Natural killer cell (primary cell): ENCODE measurements at regions of chr3 and their contacts with region 1.

Region 1: DNA sequence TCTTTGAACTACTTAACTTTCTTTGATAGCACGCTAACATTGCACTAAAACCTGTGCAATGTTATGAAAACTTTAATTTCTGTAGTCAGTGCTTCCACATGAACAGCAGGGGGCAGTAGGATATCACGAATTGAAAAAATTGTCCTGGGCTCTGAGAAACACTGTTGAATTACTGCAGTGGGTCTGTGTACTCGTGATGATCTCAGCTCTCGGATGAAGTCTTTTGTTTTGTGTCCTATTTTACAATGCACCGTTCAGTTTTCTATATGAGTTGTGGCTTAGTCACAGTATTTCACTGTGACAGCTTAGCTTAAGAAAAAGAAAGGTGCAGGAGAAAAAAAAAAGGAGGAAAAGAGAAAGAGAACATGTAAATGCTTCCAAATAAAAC is 141.3 kb upstream of the CCDC54 start:
- DNase-seq: peak in 1 of 2 donors; percentile 84
- ATAC-seq: peak; percentile 70 to 76 (median 75)
- H3K4me3 ChIP-seq: no peak overlapping the region
- H3K4me3 Mint-ChIP-seq: peak overlapping the region; percentile 77
- H3K27ac ChIP-seq: no peak overlapping the region
- H3K27ac Mint-ChIP-seq: no peak overlapping the region
- H3K4me1 ChIP-seq: peaks cover 10% of the 10 kb centered on the region
- H3K4me1 Mint-ChIP-seq: peaks cover 11 to 17% of the 10 kb centered on the region in 2 donors
- H3K27me3 ChIP-seq: peaks cover under 1% of the 10 kb centered on the region
- H3K27me3 Mint-ChIP-seq: peaks cover 25 to 40% of the 10 kb centered on the region in 2 donors
- CTCF ChIP-seq: peak; percentile 85

Region 2: GRCh38 chr3:107216711-107217110 is 19.2 kb before region 1 on chr3:
- intact Hi-C with region 1: no loop called
- DNase-seq: no peak
- ATAC-seq: no peak
- H3K4me3 ChIP-seq: no peak overlapping the region
- H3K4me3 Mint-ChIP-seq: no peak overlapping the region
- H3K27ac ChIP-seq: no peak overlapping the region
- H3K27ac Mint-ChIP-seq: no peak overlapping the region
- H3K4me1 ChIP-seq: no peaks in the 10 kb centered on the region
- H3K4me1 Mint-ChIP-seq: no peaks in the 10 kb centered on the region
- H3K27me3 ChIP-seq: no peaks in the 10 kb centered on the region
- H3K27me3 Mint-ChIP-seq: peaks cover 3 to 13% of the 10 kb centered on the region in 2 donors
- CTCF ChIP-seq: no peak

Region 3: GRCh38 chr3:107429320-107430181 is 193.6 kb after region 1 on chr3:
- intact Hi-C with region 1: loop called (anchors 2 kb)
- DNase-seq: peak; percentile 40 to 82
- ATAC-seq: peak; percentile 65 to 74 (median 71)
- H3K4me3 ChIP-seq: peak overlapping the region; percentile 73
- H3K4me3 Mint-ChIP-seq: peak overlapping the region; percentile 88
- H3K27ac ChIP-seq: no peak overlapping the region
- H3K27ac Mint-ChIP-seq: no peak overlapping the region
- H3K4me1 ChIP-seq: peaks cover 24% of the 10 kb centered on the region
- H3K4me1 Mint-ChIP-seq: peaks cover 14% of the 10 kb centered on the region in 2 donors
- H3K27me3 ChIP-seq: peaks cover 10% of the 10 kb centered on the region
- H3K27me3 Mint-ChIP-seq: peaks cover 15 to 35% of the 10 kb centered on the region in 2 donors
- CTCF ChIP-seq: peak; percentile 76

Region 4: DNA sequence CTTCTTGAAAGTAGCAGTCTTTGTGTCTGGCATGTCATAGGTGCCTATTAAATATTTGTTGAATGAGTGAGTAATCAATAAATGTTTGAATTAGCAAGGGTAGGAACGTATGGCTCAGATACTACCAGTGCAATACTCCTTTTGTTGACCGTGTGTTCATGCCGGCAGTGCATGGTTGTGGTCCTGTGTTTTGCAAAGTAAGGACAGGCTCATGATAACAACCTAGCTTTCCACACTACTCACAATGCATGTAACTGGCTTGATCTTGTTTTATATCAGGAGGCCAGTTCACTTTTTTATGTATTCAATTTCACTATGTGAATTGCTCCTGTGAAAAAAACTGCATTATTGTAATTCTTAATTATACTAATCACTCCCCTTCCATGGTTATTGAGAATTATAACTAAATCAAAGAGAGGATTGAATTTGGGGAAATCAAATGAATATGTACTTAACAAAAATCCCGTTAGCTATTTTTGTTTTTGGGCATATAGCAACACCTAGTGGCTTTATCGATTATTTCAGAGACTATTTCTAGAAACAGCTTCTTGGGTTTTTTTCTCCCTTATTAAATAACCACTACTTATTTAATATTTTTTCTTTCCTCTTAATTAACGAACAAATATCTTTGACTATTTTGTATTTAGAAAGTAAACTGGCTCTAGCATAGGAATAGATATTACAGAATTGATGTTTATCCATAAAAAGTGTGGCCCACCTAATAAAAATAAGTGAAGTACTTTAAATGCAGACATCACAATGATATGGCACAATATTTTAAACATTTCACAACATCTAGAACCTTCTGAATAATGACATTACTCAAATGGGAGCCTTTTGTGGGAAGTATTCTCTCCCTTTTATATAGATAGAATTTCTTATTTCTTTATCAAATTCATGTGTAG is 505.3 kb after region 1 on chr3:
- intact Hi-C with region 1: loop called (anchors 2 kb)
- DNase-seq: peak in 1 of 2 donors; percentile 47
- ATAC-seq: no peak
- H3K4me3 ChIP-seq: no peak overlapping the region
- H3K4me3 Mint-ChIP-seq: no peak overlapping the region
- H3K27ac ChIP-seq: no peak overlapping the region
- H3K27ac Mint-ChIP-seq: no peak overlapping the region
- H3K4me1 ChIP-seq: no peaks in the 10 kb centered on the region
- H3K4me1 Mint-ChIP-seq: peaks cover 7 to 19% of the 10 kb centered on the region in 2 donors
- H3K27me3 ChIP-seq: no peaks in the 10 kb centered on the region
- H3K27me3 Mint-ChIP-seq: no peaks in the 10 kb centered on the region
- CTCF ChIP-seq: no peak

Region 5: DNA sequence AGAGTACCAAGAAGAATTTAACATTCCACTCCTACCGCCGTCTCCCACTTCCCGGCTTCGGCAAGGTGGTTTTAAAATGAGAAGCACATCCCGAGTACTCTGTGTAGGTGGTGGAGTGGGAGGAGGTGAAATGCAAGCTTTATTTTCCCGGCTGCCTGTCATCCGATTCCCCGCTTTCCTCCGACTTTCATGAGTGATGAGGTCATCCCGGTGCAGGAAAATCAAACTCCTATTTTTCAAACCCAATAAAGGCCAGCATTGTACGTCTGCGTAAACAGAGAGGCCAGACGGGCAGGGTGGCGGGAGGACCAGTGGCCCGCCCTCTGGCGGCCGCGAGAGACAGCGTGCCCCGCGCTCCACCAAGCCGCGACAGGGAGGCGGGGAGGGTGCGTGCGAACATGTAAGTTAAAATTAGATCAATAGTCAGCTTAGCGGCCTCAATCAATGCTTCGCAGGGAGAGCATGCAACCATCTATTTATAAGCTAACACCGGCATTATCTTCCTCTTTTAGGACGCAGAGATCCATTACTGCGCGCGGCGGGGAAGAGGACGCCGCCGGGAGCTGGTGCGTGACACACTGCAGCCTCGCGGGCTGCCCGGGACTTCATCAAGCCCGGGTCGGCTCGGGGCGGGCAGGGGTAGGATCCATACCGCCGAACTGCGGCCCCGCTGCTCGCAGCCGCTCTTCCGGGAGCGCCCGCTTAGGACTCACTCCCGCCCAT is 691.6 kb after region 1 on chr3:
- intact Hi-C with region 1: loop called (anchors 2 kb)
- DNase-seq: peak; percentile 55 to 80
- ATAC-seq: peak; percentile 85 to 97 (median 95)
- H3K4me3 ChIP-seq: peak overlapping the region; percentile 47
- H3K4me3 Mint-ChIP-seq: peak overlapping the region; percentile 86
- H3K27ac ChIP-seq: no peak overlapping the region
- H3K27ac Mint-ChIP-seq: peak overlapping the region in 1 of 2 donors; percentile 63
- H3K4me1 ChIP-seq: peaks cover 10% of the 10 kb centered on the region
- H3K4me1 Mint-ChIP-seq: peaks cover 8 to 14% of the 10 kb centered on the region in 2 donors
- H3K27me3 ChIP-seq: peaks cover 12% of the 10 kb centered on the region
- H3K27me3 Mint-ChIP-seq: peaks cover 12 to 19% of the 10 kb centered on the region in 2 donors
- CTCF ChIP-seq: peak; percentile 96

Region 6: GRCh38 chr3:108477511-108478147 is 1241.7 kb after region 1 on chr3:
- intact Hi-C with region 1: loop called (anchors 2 kb)
- DNase-seq: peak; percentile 20 to 79
- ATAC-seq: peak; percentile 79 to 85 (median 83)
- H3K4me3 ChIP-seq: no peak overlapping the region
- H3K4me3 Mint-ChIP-seq: no peak overlapping the region
- H3K27ac ChIP-seq: no peak overlapping the region
- H3K27ac Mint-ChIP-seq: no peak overlapping the region
- H3K4me1 ChIP-seq: no peaks in the 10 kb centered on the region
- H3K4me1 Mint-ChIP-seq: no peaks in the 10 kb centered on the region
- H3K27me3 ChIP-seq: no peaks in the 10 kb centered on the region
- H3K27me3 Mint-ChIP-seq: peaks cover 0 to 15% of the 10 kb centered on the region in 2 donors
- CTCF ChIP-seq: peak; percentile 83